ENCODE measurements at regions of chr20 and their contacts with region 1.

Region 1: DNA sequence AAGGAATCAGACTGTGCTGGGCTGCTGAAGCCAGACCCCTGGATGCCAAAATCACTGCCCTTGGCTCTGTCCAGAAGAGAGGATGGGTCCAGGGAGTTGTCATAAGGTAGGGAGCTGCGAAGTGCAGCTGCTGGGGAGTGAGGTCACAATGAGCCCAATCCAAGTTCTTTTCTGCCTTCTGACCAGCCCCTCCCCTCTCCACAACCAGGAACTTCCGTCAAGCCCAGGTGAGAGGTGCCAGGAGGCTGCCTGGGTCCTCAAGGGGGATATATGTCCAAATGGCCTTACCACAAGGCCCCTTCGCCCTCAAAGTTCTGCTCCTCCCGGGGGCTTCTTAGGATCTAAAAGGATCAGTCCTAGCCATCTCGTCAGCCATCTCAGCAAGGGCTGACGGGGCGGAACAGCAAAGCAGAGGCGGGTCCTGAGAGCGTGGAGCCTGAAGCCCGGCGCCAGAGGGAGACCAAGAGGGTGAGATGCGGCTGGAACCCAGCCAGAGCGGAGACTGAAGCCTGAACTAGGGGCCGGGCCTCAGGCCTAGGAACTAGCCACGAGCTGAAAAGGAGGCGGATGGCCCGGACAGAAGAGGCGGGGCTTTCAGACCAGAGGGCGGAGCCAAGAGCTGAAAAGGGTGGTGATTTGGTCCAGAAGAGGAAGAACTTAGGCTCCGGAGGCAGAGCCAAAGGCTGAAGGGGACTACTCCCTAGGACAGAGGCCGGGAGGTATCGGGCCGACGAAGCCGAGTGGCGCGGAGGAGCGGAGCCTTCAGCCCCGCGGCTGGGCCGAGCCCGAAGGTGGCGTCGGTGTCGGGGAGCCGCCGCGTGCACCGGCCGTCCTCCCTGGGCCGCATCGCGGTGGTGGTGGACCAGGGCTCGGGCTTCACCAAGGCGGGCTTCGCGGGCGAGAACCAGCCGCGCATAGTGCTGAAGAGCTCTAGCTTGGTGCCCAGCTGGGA is at the start of gene ACTL10:
- DNase-seq: peak; percentile 65 to 85 (median 66)
- H3K4me3 ChIP-seq: peak within 1 kb of the TSS; percentile 47 to 52
- H3K4me3 Mint-ChIP-seq: peak within 1 kb of the TSS; percentile 95 to 98 (median 97)
- H3K27ac ChIP-seq: peak within 1 kb of the TSS; percentile 60
- H3K27ac Mint-ChIP-seq: peak within 1 kb of the TSS; percentile 95 to 99 (median 97)
- H3K4me1 ChIP-seq: peaks cover 41% of the 10 kb centered on the region
- H3K4me1 Mint-ChIP-seq: peaks cover 20 to 71% (median 36%) of the 10 kb centered on the region in 4 donors
- H3K27me3 ChIP-seq: no peaks in the 10 kb centered on the region
- H3K27me3 Mint-ChIP-seq: no peaks in the 10 kb centered on the region
- total RNA-seq, gene ACTL10: 5.5 to 6.0 TPM

Region 2: GRCh38 chr20:32999603-33000250 is 666.8 kb before region 1 on chr20:
- CTCF ChIA-PET with region 1: no interaction called
- POLR2A ChIA-PET with region 1: no interaction called
- intact Hi-C with region 1: no loop called
- DNase-seq: no peak
- H3K4me3 ChIP-seq: no peak overlapping the region
- H3K4me3 Mint-ChIP-seq: no peak overlapping the region
- H3K27ac ChIP-seq: no peak overlapping the region
- H3K27ac Mint-ChIP-seq: peak overlapping the region in 1 of 7 donors; percentile 30
- H3K4me1 ChIP-seq: peaks cover 11% of the 10 kb centered on the region
- H3K4me1 Mint-ChIP-seq: peaks cover 10 to 34% (median 19%) of the 10 kb centered on the region in 4 donors
- H3K27me3 ChIP-seq: no peaks in the 10 kb centered on the region
- H3K27me3 Mint-ChIP-seq: no peaks in the 10 kb centered on the region

Region 3: DNA sequence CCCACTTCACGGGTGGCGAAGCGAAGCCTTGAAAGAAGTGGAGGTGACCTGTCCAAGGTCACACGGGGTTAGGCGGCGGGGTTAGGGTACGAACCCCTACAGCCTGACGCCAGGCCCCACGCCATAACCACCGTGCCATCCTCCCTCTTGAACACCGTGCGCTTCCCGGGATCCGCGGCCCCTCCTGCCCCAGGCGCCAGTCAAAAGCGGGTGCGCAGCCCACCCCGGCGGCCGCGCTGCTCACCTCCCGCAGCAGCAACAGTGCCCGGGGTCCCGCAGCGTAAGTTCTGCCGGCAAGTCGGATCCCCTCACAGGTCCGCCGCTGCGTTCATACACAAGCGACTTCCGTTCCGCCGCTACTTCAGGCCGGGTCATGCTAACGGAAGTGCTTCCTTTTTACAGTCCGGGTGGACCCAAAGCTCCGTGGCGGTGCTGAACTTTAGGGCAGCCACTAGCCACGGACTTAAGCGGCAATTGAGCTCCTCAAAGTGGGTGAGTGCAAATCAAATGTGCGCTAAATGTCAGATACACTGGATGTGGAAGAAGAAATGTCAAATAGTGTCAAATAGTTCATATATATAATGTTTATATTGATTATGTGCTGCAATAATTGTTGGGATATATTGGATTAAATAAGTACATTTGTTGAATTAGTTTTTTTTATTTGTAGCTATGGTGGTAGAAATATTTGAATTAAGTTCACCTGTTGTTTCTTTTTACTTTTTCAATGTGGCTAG is 265.2 kb before region 1 on chr20 and contains the start of gene CDK5RAP1:
- CTCF ChIA-PET with region 1: interaction called, 4 read pairs
- POLR2A ChIA-PET with region 1: interaction called, 7 read pairs
- intact Hi-C with region 1: loop called (anchors 2 kb)
- DNase-seq: peak; percentile 82 to 88 (median 83)
- H3K4me3 ChIP-seq: peak within 1 kb of the TSS; percentile 100
- H3K4me3 Mint-ChIP-seq: peak within 1 kb of the TSS; percentile 93 to 98 (median 98)
- H3K27ac ChIP-seq: peak within 1 kb of the TSS; percentile 74
- H3K27ac Mint-ChIP-seq: peak within 1 kb of the TSS; percentile 6 to 95 (median 94)
- H3K4me1 ChIP-seq: peaks cover 52% of the 10 kb centered on the region
- H3K4me1 Mint-ChIP-seq: peaks cover 24 to 66% (median 46%) of the 10 kb centered on the region in 4 donors
- H3K27me3 ChIP-seq: no peaks in the 10 kb centered on the region
- H3K27me3 Mint-ChIP-seq: no peaks in the 10 kb centered on the region
- total RNA-seq, gene CDK5RAP1: 50.9 to 51.8 TPM

Region 4: GRCh38 chr20:33460711-33461110 is 205.9 kb before region 1 on chr20:
- CTCF ChIA-PET with region 1: interaction called, 54 read pairs
- POLR2A ChIA-PET with region 1: interaction called, 12 read pairs
- intact Hi-C with region 1: loop called (anchors 1 kb)
- DNase-seq: no peak
- H3K4me3 ChIP-seq: no peak overlapping the region
- H3K4me3 Mint-ChIP-seq: no peak overlapping the region
- H3K27ac ChIP-seq: no peak overlapping the region
- H3K27ac Mint-ChIP-seq: no peak overlapping the region
- H3K4me1 ChIP-seq: no peaks in the 10 kb centered on the region
- H3K4me1 Mint-ChIP-seq: peaks cover 0 to 2% (median 0%) of the 10 kb centered on the region in 4 donors
- H3K27me3 ChIP-seq: no peaks in the 10 kb centered on the region
- H3K27me3 Mint-ChIP-seq: no peaks in the 10 kb centered on the region

Region 5: GRCh38 chr20:33624399-33624798 is 42.2 kb before region 1 on chr20:
- CTCF ChIA-PET with region 1: interaction called, 4 read pairs
- POLR2A ChIA-PET with region 1: interaction called, 27 read pairs
- intact Hi-C with region 1: no loop called
- DNase-seq: peak in 4 of 5 donors; percentile 15 to 30 (median 22)
- H3K4me3 ChIP-seq: peak overlapping the region in 1 of 2 donors; percentile 26
- H3K4me3 Mint-ChIP-seq: peak overlapping the region in 7 of 8 donors; percentile 18 to 75 (median 58)
- H3K27ac ChIP-seq: no peak overlapping the region
- H3K27ac Mint-ChIP-seq: peak overlapping the region; percentile 80 to 91 (median 89)
- H3K4me1 ChIP-seq: peaks cover 26% of the 10 kb centered on the region
- H3K4me1 Mint-ChIP-seq: peaks cover 9 to 46% (median 27%) of the 10 kb centered on the region in 4 donors
- H3K27me3 ChIP-seq: no peaks in the 10 kb centered on the region
- H3K27me3 Mint-ChIP-seq: no peaks in the 10 kb centered on the region

Region 6: GRCh38 chr20:33686100-33686983 is 19.8 kb after region 1 on chr20 and contains the start of gene E2F1:
- CTCF ChIA-PET with region 1: interaction called, 88 read pairs
- POLR2A ChIA-PET with region 1: interaction called, 122 read pairs
- intact Hi-C with region 1: loop called (anchors 1 kb)
- DNase-seq: peak; percentile 91 to 95 (median 93)
- H3K4me3 ChIP-seq: peak within 1 kb of the TSS in 1 of 2 donors; percentile 38
- H3K4me3 Mint-ChIP-seq: peak within 1 kb of the TSS; percentile 82 to 89 (median 86)
- H3K27ac ChIP-seq: peak within 1 kb of the TSS; percentile 54
- H3K27ac Mint-ChIP-seq: peak within 1 kb of the TSS; percentile 84 to 94 (median 91)
- H3K4me1 ChIP-seq: peaks cover 40% of the 10 kb centered on the region
- H3K4me1 Mint-ChIP-seq: peaks cover 26 to 62% (median 43%) of the 10 kb centered on the region in 4 donors
- H3K27me3 ChIP-seq: no peaks in the 10 kb centered on the region
- H3K27me3 Mint-ChIP-seq: no peaks in the 10 kb centered on the region
- total RNA-seq, gene E2F1: 2.2 to 2.6 TPM

Region 7: DNA sequence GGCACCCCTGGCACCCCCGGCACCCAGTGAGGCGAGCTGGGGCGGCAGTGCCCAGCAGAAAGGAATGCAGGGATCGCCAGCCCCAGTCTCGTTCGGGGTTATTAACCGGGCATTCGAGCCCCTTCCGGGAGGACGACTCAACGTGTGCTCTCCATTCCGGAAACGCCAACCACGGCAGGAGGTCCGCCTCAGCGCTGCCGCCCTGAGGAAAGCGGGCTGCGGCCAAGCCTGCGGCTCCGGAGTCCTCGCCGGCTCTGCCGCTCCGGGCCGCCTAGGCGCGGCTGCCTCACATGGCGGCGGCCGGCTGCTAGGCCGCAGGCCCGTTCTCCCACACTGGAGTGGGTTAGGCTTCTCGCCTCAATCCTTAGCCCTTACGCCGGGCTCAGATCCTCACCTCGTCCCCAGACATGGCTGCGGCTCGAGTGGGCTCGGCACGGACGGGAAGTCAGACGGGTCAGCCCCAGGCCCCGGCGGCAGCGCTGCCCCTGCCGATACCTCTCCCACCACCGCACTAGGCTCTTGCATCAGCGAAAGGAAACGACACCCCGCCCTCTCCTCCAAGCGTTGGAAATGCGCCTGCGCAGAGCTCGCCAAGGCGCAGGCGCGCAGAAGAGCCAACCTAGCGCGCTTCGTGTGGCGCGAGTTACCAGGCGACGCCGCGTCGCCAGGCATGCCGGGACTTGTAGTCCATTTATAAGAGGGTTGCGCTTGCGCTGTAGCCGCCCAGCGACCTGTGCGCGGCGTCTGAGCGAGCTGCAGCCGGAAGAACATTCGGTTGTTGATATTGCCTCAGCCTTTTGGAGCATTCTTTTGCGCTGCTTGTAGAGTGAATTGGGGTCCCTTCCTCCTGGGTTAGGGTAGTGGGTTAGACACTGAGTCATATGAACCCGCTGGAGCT is 445.4 kb after region 1 on chr20 and contains the start of gene EIF2S2:
- CTCF ChIA-PET with region 1: no interaction called
- POLR2A ChIA-PET with region 1: interaction called, 5 read pairs
- intact Hi-C with region 1: loop called (anchors 1 kb)
- DNase-seq: peak; percentile 93 to 97 (median 97)
- H3K4me3 ChIP-seq: peak within 1 kb of the TSS; percentile 92 to 94
- H3K4me3 Mint-ChIP-seq: peak within 1 kb of the TSS; percentile 90 to 99 (median 94)
- H3K27ac ChIP-seq: peak within 1 kb of the TSS; percentile 95
- H3K27ac Mint-ChIP-seq: peak within 1 kb of the TSS; percentile 91 to 99 (median 96)
- H3K4me1 ChIP-seq: peaks cover 47% of the 10 kb centered on the region
- H3K4me1 Mint-ChIP-seq: peaks cover 32 to 52% (median 40%) of the 10 kb centered on the region in 4 donors
- H3K27me3 ChIP-seq: no peaks in the 10 kb centered on the region
- H3K27me3 Mint-ChIP-seq: no peaks in the 10 kb centered on the region
- total RNA-seq, gene EIF2S2: 52.2 to 53.1 TPM